Heart right ventricle (tissue), 16 donors: ENCODE measurements at regions of chr7 and their contacts with region 1.

Region 1: DNA sequence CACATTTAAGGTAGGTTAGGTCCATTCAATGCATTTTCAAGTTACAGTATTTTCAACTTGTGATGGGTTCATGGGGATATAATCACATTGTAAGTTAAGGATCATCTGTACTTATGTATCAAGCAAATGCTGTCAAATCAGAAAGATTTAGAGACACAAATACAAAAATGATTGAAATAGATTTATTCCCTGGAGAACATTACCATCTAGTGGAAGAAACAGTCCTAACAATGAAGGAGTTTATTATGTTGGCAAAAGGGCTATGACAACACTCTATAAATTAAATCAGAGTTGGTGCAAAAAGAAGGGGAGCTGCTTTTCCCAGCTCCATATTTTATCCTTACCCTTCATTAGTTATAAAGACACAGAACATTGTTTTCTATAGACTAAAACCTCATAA is 69.0 kb downstream of the PRSS58 start:
- DNase-seq: no peak
- ATAC-seq: no peak
- H3K4me3 ChIP-seq: no peak overlapping the region
- H3K27ac ChIP-seq: no peak overlapping the region
- H3K4me1 ChIP-seq: peaks cover 0 to 6% (median 0%) of the 10 kb centered on the region in 9 donors
- H3K27me3 ChIP-seq: peaks cover 0 to 5% (median 0%) of the 10 kb centered on the region in 7 donors
- CTCF ChIP-seq: peak in 7 of 9 donors; percentile 12 to 42 (median 29)

Region 2: DNA sequence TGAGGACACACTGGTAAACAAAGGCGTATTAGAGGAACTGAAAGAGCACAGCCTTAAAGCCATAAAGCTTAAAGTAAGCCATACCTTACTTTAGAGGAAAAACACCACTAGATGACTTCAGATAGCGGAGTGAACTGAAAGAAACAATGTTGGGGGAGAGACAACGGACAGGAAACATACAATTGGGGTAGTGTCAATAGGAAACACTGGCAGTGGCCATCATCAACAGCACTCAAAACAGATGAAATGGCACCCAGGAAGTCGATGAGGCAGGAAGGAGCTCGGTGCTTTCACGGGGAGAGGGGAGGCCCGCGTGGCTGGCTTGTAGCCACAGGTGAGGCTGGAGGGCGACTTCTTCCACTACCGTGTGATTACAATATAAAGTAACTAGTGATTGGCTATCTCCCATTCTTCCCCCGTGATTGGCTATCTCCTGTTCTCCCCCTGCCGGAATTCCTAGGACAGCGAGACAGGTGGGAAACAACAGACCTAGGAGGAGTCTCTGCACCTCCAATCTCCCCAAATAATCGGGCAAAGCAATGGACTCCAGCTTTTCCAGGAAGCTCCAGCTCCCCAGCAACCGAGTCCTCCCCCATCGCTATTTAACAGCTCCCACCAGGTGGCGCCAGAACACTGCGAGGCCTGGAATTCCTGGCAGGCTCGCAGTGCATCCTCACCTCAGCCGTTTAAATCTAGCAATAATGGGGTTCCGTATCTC is 212.9 kb before region 1 on chr7:
- intact Hi-C with region 1: loop called in 7 of 10 experiments (anchors 5 to 10 kb)
- DNase-seq: peak; percentile 55 to 67
- ATAC-seq: peak in 7 of 8 donors; percentile 45 to 76 (median 71)
- H3K4me3 ChIP-seq: peak overlapping the region in 7 of 10 donors; percentile 5 to 43 (median 27)
- H3K27ac ChIP-seq: peak overlapping the region in 1 of 10 donors; percentile 66
- H3K4me1 ChIP-seq: peaks cover 0 to 5% (median 0%) of the 10 kb centered on the region in 9 donors
- H3K27me3 ChIP-seq: no peaks in the 10 kb centered on the region
- CTCF ChIP-seq: peak; percentile 26 to 89 (median 74)

Region 3: DNA sequence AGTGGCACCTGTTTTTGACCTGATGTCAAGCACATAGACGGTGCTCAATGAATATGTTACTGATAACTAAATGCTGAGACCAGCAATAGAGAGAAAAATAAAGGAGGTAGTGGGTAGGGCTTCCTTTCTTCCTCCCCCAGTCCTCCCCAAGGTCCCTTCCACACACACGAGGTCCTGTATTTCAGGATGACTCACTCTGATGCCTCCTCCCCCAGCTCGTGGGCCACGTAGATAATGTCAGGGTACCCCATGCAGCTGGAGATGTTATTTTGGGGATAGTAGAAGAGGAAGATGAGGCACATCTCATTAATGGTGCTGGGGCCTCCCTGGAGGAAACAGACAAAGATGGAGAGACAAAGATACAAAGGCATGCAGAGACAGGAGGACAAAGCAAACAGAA is 51.7 kb after region 1 on chr7:
- intact Hi-C with region 1: no loop called
- DNase-seq: no peak
- ATAC-seq: no peak
- H3K4me3 ChIP-seq: no peak overlapping the region
- H3K27ac ChIP-seq: no peak overlapping the region
- H3K4me1 ChIP-seq: no peaks in the 10 kb centered on the region
- H3K27me3 ChIP-seq: peaks cover 0 to 10% (median 0%) of the 10 kb centered on the region in 7 donors
- CTCF ChIP-seq: no peak

Region 4: GRCh38 chr7:142263598-142264380 is 74.9 kb after region 1 on chr7:
- intact Hi-C with region 1: no loop called
- DNase-seq: no peak
- ATAC-seq: no peak
- H3K4me3 ChIP-seq: no peak overlapping the region
- H3K27ac ChIP-seq: no peak overlapping the region
- H3K4me1 ChIP-seq: no peaks in the 10 kb centered on the region
- H3K27me3 ChIP-seq: no peaks in the 10 kb centered on the region
- CTCF ChIP-seq: no peak